ENCODE measurements at regions of chr13 and their contacts with region 1.

Region 1: DNA sequence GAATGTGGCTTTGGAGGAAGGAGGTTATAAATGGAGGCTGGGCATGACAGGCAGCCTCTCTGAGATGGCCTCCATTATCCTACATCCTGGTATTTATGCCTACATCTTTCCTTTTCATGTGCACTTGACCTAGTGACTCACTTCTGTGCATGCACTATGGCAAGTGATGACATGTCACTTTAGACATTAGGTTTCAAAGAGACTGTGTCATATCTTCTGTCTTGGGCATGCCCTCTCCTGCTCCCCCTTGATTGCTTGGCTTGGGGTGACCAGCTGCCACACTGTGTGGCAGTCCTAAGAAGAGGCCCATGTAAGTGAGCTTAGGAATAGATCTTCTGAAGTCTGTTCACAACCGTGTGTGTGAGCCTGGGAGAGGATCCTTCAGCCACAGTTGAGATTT is 472.8 kb downstream of the FGF9 start:
- DNase-seq: no peak
- H3K4me3 ChIP-seq: no peak overlapping the region
- H3K27ac ChIP-seq: no peak overlapping the region
- H3K4me1 ChIP-seq: no peaks in the 10 kb centered on the region
- H3K27me3 ChIP-seq: no peaks in the 10 kb centered on the region
- CTCF ChIP-seq: no peak

Region 2: GRCh38 chr13:22040810-22041371 is 102.8 kb before region 1 on chr13:
- CTCF ChIA-PET with region 1: no interaction called
- POLR2A ChIA-PET with region 1: no interaction called
- intact Hi-C with region 1: no loop called
- DNase-seq: no peak
- H3K4me3 ChIP-seq: no peak overlapping the region
- H3K27ac ChIP-seq: no peak overlapping the region
- H3K4me1 ChIP-seq: no peaks in the 10 kb centered on the region
- H3K27me3 ChIP-seq: no peaks in the 10 kb centered on the region
- CTCF ChIP-seq: no peak

Region 3: GRCh38 chr13:22161871-22162270 is 18.2 kb after region 1 on chr13:
- CTCF ChIA-PET with region 1: no interaction called
- POLR2A ChIA-PET with region 1: no interaction called
- intact Hi-C with region 1: loop called (anchors 2 kb)
- DNase-seq: no peak
- H3K4me3 ChIP-seq: no peak overlapping the region
- H3K27ac ChIP-seq: no peak overlapping the region
- H3K4me1 ChIP-seq: no peaks in the 10 kb centered on the region
- H3K27me3 ChIP-seq: no peaks in the 10 kb centered on the region
- CTCF ChIP-seq: no peak